ENCODE measurements at regions of chr9 and their contacts with region 1.

Region 1: GRCh38 chr9:69549310-69550202 is 122.6 kb downstream of the APBA1 start:
- DNase-seq: peak; percentile 58
- H3K4me3 ChIP-seq: no peak overlapping the region
- H3K27ac ChIP-seq: no peak overlapping the region
- H3K4me1 ChIP-seq: no peaks in the 10 kb centered on the region
- H3K27me3 ChIP-seq: peaks cover 42% of the 10 kb centered on the region
- CTCF ChIP-seq: peak; percentile 82

Region 2: DNA sequence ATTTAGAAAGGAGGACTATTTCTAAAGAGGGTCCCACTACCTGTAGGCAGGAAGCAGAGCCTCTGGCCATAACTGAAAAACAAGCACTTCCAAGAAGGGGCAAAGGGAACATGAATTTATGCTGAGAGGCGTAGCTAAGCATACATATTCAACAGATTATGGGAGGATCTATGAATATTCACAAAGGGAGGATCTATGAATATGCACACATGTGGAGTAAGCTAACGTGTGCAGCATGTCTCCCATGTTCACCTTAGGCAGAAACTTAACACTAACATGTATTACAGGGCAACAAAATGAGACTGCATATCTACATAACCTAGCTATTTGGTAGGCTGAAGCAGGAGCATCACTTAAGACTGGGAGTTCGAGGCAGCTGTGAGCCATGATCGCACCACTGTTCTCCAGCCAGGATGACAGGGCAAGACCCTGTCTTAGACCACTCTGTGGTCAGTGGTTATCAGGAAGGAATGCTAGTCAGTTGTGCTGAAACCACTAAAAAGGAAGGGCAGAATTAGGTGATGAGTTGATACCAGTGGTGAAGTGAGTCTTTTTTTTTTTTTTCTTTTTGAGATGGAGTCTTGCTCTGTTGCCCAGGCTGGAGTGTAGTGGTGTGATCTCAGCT is 493.3 kb before region 1 on chr9:
- CTCF ChIA-PET with region 1: no interaction called
- POLR2A ChIA-PET with region 1: no interaction called
- intact Hi-C with region 1: loop called (anchors 5 kb)
- DNase-seq: no peak
- H3K4me3 ChIP-seq: no peak overlapping the region
- H3K27ac ChIP-seq: no peak overlapping the region
- H3K4me1 ChIP-seq: no peaks in the 10 kb centered on the region
- H3K27me3 ChIP-seq: no peaks in the 10 kb centered on the region
- CTCF ChIP-seq: no peak

Region 3: DNA sequence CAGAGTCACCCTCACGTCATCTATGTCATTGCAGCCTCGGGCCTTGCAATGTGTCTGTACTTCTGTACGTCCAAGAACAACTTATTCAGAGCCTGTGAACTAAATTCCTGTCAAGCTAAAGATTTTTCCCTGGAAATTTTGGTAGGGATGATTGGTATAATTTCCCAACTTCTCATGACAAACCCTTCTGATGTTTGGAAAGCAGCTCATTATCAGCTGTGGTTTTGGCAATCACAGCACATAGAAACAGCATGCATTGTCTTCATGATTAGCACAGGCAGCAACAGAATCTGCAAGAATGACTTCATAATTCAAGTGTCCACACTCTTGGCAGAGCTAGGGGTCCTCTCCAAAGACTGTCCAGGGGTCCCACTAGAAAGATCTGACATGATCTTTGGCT is 73.1 kb after region 1 on chr9:
- CTCF ChIA-PET with region 1: no interaction called
- POLR2A ChIA-PET with region 1: interaction called, 12 read pairs
- intact Hi-C with region 1: no loop called
- DNase-seq: no peak
- H3K4me3 ChIP-seq: no peak overlapping the region
- H3K27ac ChIP-seq: no peak overlapping the region
- H3K4me1 ChIP-seq: no peaks in the 10 kb centered on the region
- H3K27me3 ChIP-seq: peaks cover 19% of the 10 kb centered on the region
- CTCF ChIP-seq: no peak